ENCODE measurements at regions of chr12 and their contacts with region 1.

Region 1: DNA sequence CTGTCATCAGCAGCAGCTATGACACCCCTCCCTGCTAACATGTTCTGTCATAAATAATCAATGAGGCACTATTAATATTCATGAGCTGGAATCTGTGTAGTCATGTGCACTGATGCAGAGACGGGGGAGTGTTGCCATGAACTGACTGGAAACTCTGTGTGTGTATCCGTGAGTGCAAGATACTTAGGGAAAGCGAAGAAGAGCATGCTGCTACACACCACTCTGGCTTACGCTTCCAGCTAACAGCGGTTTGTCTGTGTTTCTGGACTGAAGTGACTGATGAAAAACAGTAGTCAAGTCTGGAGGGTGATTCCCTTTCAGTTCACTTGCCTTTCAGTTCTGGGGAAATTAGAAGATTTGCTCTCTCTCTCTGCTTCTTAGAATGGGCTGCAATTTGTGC is 249.4 kb downstream of the PDZRN4 start:
- DNase-seq: peak; percentile 60
- H3K4me3 ChIP-seq: peak overlapping the region; percentile 72
- H3K27ac ChIP-seq: peak overlapping the region; percentile 93
- H3K4me1 ChIP-seq: peaks cover 64% of the 10 kb centered on the region
- CTCF ChIP-seq: no peak

Region 2: DNA sequence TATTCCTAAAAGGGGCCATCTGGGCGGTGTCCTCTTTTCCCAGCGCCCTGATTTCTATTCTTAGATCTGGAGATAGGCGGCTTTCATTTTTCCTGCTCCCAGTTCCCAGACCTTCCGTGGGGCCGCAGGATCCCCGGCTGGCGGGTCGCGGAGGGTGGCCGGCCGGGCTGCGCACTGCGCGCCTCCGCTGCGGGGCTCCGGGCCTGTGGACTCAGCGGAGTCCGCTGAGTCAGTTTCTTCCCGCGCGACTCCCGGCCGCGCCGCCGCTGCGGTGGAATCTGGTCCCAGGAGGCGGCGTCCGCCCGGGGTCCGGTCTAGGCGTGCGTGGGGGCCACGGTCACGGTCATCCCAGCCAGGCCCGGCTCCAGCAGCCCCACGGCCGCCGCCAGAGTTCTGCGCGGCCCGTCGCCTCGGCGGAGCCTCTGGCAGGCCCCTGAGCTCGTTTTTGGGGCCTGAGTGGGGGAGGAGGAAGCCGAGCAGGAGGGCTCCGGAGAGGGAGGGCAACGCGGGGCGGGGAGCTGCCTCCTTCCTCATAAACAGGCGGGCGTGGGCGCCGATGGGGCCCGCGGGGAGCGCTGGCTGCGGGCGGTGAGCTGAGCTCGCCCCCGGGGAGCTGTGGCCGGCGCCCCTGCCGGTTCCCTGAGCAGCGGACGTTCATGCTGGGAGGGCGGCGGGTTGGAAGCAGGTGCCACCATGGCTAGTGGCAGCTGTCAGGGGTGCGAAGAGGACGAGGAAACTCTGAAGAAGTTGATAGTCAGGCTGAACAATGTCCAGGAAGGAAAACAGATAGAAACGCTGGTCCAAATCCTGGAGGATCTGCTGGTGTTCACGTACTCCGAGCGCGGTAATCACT is 1212.9 kb before region 1 on chr12 and contains the start of gene LRRK2:
- CTCF ChIA-PET with region 1: no interaction called
- POLR2A ChIA-PET with region 1: no interaction called
- intact Hi-C with region 1: loop called (anchors 10 kb)
- DNase-seq: peak; percentile 93
- H3K4me3 ChIP-seq: peak within 1 kb of the TSS; percentile 78
- H3K27ac ChIP-seq: peak within 1 kb of the TSS; percentile 99
- H3K4me1 ChIP-seq: peaks cover 60% of the 10 kb centered on the region
- CTCF ChIP-seq: peak; percentile 26; the same call in 1 of the 2 replicates
- total RNA-seq, gene LRRK2: 5.9 and 10.1 TPM in 2 replicates

Region 3: GRCh38 chr12:41325336-41325735 is 112.2 kb before region 1 on chr12:
- CTCF ChIA-PET with region 1: no interaction called
- POLR2A ChIA-PET with region 1: no interaction called
- intact Hi-C with region 1: no loop called
- DNase-seq: no peak
- H3K4me3 ChIP-seq: no peak overlapping the region
- H3K27ac ChIP-seq: no peak overlapping the region
- H3K4me1 ChIP-seq: no peaks in the 10 kb centered on the region
- CTCF ChIP-seq: no peak

Region 4: DNA sequence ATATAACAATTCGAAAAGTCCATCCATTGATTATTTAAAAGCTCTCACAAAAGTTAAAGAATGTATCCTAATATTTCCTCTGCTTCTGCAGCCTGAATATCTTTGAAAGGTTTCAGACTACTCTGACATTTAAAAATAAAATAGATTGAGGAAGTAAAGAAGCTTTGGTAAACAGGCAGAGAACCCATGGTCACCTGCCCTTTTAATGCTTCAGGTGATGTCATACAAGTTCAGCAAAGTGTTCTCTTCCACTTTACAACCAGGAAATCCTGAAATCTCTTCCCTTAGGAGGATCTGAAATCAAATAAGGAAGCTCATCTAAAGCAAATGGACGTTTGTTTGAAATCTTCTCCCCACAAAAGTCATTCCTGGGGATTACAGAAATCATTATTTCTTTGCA is 72.9 kb after region 1 on chr12:
- CTCF ChIA-PET with region 1: no interaction called
- POLR2A ChIA-PET with region 1: interaction called, 17 read pairs
- intact Hi-C with region 1: loop called (anchors 5 kb)
- DNase-seq: peak; percentile 33
- H3K4me3 ChIP-seq: no peak overlapping the region
- H3K27ac ChIP-seq: peak overlapping the region; percentile 2
- H3K4me1 ChIP-seq: peaks cover 31% of the 10 kb centered on the region
- CTCF ChIP-seq: no peak

Region 5: DNA sequence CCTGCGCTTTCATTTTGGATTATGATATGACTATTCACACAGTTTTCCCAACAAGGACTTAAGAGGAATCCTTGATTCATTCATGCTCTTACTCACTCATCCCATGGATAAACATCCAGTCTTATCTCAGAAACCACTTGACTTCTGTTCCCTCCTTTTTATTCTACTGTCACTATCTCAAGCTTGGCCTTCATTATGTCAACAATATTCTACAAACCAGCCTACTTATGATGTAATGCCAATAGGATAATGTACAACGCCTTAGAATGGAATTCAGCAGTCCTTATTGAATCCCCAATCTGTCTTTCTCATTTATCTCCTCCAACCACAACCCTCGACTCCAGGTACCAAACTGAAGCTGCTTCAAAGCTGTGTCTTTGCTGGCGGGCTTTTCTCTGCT is 199.1 kb after region 1 on chr12:
- CTCF ChIA-PET with region 1: no interaction called
- POLR2A ChIA-PET with region 1: no interaction called
- intact Hi-C with region 1: no loop called
- DNase-seq: no peak
- H3K4me3 ChIP-seq: no peak overlapping the region
- H3K27ac ChIP-seq: no peak overlapping the region
- H3K4me1 ChIP-seq: no peaks in the 10 kb centered on the region
- CTCF ChIP-seq: no peak

Region 6: DNA sequence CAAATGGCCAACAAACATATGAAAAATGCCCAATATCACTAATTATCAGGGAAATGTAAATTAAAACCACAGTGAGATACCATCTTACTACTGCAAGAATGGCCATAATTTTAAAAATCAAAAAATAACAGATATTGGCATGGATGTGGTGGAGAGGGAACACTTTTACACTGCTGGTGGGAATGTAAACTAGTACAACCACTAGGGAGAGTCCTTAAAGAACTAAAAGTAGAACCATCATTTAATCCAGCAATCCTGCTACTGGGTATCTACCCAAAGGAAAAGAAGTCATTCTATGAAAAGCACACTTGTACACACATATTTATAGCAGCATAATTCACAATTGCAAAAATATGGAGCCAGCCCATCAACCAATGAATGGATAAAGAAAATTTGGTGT is 247.4 kb after region 1 on chr12:
- CTCF ChIA-PET with region 1: no interaction called
- POLR2A ChIA-PET with region 1: interaction called, 5 read pairs
- intact Hi-C with region 1: loop called (anchors 5 kb)
- DNase-seq: no peak
- H3K4me3 ChIP-seq: no peak overlapping the region
- H3K27ac ChIP-seq: no peak overlapping the region
- H3K4me1 ChIP-seq: peaks cover 30% of the 10 kb centered on the region
- CTCF ChIP-seq: no peak; the same call in 1 of the 2 replicates

Region 7: GRCh38 chr12:42023733-42024494 is 586.4 kb after region 1 on chr12:
- CTCF ChIA-PET with region 1: no interaction called
- POLR2A ChIA-PET with region 1: interaction called, 9 read pairs
- intact Hi-C with region 1: loop called (anchors 2 kb)
- DNase-seq: peak; percentile 88
- H3K4me3 ChIP-seq: peak overlapping the region; percentile 58
- H3K27ac ChIP-seq: no peak overlapping the region
- H3K4me1 ChIP-seq: peaks cover 49% of the 10 kb centered on the region
- CTCF ChIP-seq: peak; percentile 98

Region 8: DNA sequence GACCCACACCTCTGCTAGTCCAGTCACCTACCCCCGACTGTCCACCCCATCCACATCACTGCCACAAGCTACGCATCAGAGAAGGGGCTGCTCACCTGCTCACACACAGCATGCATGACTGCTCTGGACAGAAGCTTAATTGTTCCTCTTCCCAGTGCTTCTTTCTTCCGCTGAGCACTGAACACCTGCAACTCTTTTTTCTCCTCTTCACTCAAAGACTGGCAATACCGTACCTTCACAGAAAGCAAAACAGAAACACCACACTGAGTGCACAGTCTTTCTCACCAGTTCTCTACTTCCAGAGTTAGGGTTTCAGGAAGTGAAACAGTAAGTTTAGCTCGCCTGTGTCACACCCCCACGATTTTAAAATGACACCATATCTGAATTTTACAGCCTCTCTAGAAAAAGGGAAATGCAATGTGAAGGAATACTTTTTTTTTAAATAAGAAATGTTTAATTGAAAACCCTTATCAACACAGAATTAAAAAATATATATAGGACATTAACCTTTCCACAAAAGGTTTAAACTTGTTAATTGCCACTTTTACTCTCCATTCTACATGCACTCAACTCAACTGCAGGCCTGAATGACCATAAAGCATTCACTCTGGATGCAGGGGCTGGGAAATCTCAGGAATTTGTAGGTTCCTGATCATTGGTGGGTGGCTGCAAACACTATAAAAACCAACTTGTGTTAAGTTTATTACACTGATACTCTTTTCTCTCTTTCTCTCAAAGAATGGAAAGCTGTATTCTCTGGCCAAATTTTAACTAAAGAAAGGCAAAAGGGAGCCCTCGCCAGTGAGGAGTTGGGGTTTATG is 1032.0 kb after region 1 on chr12:
- CTCF ChIA-PET with region 1: no interaction called
- POLR2A ChIA-PET with region 1: no interaction called
- intact Hi-C with region 1: loop called (anchors 5 kb)
- DNase-seq: peak; percentile 94
- H3K4me3 ChIP-seq: peak overlapping the region; percentile 55
- H3K27ac ChIP-seq: peak overlapping the region; percentile 80
- H3K4me1 ChIP-seq: peaks cover 42% of the 10 kb centered on the region
- CTCF ChIP-seq: no peak